ENCODE measurements at regions of chr1 and their contacts with region 1.

Region 1: DNA sequence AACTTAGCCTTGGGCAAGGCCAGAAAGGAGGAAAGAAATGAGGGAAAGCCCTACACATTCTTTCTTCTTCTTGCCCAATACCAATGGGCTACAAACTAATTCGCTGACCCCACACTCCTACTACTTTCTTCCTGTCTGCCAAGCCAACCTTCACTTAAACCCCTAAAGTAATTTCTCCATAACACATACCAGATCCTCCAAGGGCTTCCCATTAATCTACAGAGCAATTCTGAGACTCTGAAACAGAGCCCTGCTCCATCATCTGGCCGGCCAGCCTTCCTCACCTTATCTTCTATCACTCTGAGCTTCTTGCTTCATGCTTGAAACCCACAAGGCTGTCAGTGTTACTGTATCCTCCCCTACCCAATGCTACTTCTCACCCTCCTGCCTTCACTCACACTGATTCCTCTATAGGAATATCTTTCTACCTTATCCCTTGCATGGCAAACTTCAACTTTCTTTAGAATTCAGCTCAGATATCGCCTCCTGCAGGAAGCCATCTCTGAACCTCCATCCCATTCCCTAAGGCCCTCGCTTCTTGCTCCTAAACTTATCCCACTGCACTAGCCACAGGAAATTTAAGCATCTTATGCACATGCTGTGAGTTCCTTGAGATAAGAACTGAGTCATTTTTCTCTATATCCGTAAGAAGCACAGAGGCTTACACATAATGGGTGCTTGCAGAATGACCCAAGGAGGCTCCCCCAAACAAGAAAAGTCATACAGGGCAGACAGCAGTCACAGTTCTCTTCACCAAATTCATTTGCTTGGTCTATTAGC is 81.9 kb downstream of the JAK1 start:
- DNase-seq: no peak
- ATAC-seq: no peak
- H3K4me3 ChIP-seq: no peak overlapping the region
- H3K27ac ChIP-seq: no peak overlapping the region
- H3K4me1 ChIP-seq: peaks cover 2 to 66% (median 14%) of the 10 kb centered on the region in 12 donors
- H3K27me3 ChIP-seq: no peaks in the 10 kb centered on the region
- CTCF ChIP-seq: no peak
- POLR2A ChIP-seq: no peak

Region 2: GRCh38 chr1:64790832-64791487 is 93.5 kb before region 1 on chr1:
- intact Hi-C with region 1: no loop called
- DNase-seq: no peak
- ATAC-seq: no peak
- H3K4me3 ChIP-seq: no peak overlapping the region
- H3K27ac ChIP-seq: no peak overlapping the region
- H3K4me1 ChIP-seq: no peaks in the 10 kb centered on the region
- H3K27me3 ChIP-seq: no peaks in the 10 kb centered on the region
- CTCF ChIP-seq: no peak
- POLR2A ChIP-seq: no peak

Region 3: GRCh38 chr1:64923294-64923721 is 38.9 kb after region 1 on chr1:
- intact Hi-C with region 1: loop called in 1 of 10 experiments (anchors 5 kb)
- DNase-seq: no peak
- ATAC-seq: no peak
- H3K4me3 ChIP-seq: no peak overlapping the region
- H3K27ac ChIP-seq: no peak overlapping the region
- H3K4me1 ChIP-seq: peaks cover under 1 to 94% (median 50%) of the 10 kb centered on the region in 12 donors
- H3K27me3 ChIP-seq: no peaks in the 10 kb centered on the region
- CTCF ChIP-seq: no peak
- POLR2A ChIP-seq: no peak

Measured in heart left ventricle (tissue), 16 donors.